ENCODE measurements at regions of chr1 and their contacts with region 1.

Region 1: DNA sequence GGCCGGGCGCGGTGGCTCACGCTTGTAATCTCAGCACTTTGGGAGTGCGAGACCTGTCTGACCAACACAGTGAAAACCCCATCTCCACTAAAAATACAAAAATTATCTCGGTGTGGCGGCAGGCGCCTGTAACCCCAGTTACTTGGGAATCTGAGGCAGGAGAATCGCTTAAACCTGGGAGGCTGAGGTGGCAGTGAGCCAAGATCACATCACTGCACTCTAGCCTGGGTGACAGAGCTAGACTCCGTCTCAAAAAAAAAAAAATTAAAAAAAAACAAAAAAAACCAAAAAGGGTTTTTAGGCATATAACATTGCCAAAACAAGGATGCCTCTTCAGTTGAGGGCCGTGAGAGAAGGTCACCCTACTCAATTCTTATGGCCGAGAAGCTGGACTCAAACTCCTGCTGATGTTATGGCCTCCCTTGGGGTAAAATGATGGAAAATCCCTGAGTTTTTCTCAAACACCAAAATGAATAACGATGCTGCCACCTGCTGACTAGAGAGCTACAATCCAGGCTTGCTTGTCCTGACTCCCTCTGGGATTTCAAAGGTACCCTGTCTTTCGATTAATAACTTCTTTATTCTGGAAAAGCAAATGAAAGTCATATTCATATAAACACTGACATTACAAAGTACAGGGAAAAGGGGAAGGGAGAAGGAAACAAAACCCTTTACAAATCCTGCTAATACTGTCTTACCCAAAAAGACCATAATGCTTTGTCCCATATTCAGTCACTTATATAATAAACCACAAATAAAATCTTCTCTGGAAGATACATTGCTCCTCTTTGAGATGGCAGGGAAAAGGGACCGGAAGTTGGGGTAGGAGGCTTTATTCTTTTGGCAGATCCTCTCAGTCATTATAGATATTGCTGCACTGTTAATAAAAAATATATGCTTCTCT is 10.7 kb downstream of the RAB42 start:
- DNase-seq: peak; percentile 47 to 50
- H3K4me3 ChIP-seq: no peak overlapping the region
- H3K27ac ChIP-seq: peak overlapping the region; percentile 89
- H3K4me1 ChIP-seq: peaks cover 23% of the 10 kb centered on the region
- H3K27me3 ChIP-seq: no peaks in the 10 kb centered on the region
- CTCF ChIP-seq: peak; percentile 75

Region 2: GRCh38 chr1:27858072-27858958 is 744.5 kb before region 1 on chr1:
- CTCF ChIA-PET with region 1: no interaction called
- POLR2A ChIA-PET with region 1: no interaction called
- intact Hi-C with region 1: loop called (anchors 5 kb)
- DNase-seq: peak; percentile 58 to 80
- H3K4me3 ChIP-seq: no peak overlapping the region
- H3K27ac ChIP-seq: no peak overlapping the region
- H3K4me1 ChIP-seq: peaks cover 9% of the 10 kb centered on the region
- H3K27me3 ChIP-seq: no peaks in the 10 kb centered on the region
- CTCF ChIP-seq: peak; percentile 91

Region 3: DNA sequence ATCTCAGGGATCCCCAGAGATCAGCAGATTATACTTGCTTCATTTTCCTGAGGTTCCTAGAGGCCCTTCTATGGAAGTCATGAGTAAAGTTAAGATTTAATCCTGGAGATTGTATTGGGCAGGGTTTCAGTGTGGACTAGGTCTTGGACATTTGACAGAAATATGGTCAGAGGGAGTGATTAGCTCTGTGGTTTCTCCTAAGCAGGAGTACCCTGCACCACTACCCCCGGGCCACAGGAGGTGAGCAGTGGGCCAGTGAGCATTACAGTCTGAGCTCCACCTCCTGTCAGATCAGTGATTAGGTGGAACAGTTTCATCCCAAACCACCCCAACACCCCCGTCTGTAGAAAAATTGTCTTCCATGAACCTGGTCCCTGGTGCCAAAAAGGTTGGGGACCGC is 190.1 kb before region 1 on chr1:
- CTCF ChIA-PET with region 1: no interaction called
- POLR2A ChIA-PET with region 1: no interaction called
- intact Hi-C with region 1: loop called (anchors 1 kb)
- DNase-seq: no peak
- H3K4me3 ChIP-seq: no peak overlapping the region
- H3K27ac ChIP-seq: no peak overlapping the region
- H3K4me1 ChIP-seq: peaks cover 13% of the 10 kb centered on the region
- H3K27me3 ChIP-seq: no peaks in the 10 kb centered on the region
- CTCF ChIP-seq: no peak

Region 4: GRCh38 chr1:28505406-28506187 is 97.2 kb before region 1 on chr1 and contains the start of gene RCC1:
- CTCF ChIA-PET with region 1: interaction called, 8 read pairs
- POLR2A ChIA-PET with region 1: interaction called, 22 read pairs
- intact Hi-C with region 1: no loop called
- DNase-seq: peak; percentile 92 to 95
- H3K4me3 ChIP-seq: peak within 1 kb of the TSS; percentile 83
- H3K27ac ChIP-seq: peak within 1 kb of the TSS; percentile 99
- H3K4me1 ChIP-seq: peaks cover 38% of the 10 kb centered on the region
- H3K27me3 ChIP-seq: 0 out of 2 replicates have a peak, but pooled peaks cover 3% of the 10 kb centered on the region
- CTCF ChIP-seq: no peak
- total RNA-seq, gene RCC1: 134 and 156 TPM in 2 replicates

Region 5: GRCh38 chr1:28552758-28553663 is 49.8 kb before region 1 on chr1 and contains the start of gene TRNAU1AP:
- CTCF ChIA-PET with region 1: interaction called, 3 read pairs
- POLR2A ChIA-PET with region 1: no interaction called
- intact Hi-C with region 1: loop called (anchors 5 kb)
- DNase-seq: peak; percentile 82 to 97
- H3K4me3 ChIP-seq: peak within 1 kb of the TSS; percentile 63
- H3K27ac ChIP-seq: peak within 1 kb of the TSS; percentile 62
- H3K4me1 ChIP-seq: peaks cover 6% of the 10 kb centered on the region
- H3K27me3 ChIP-seq: no peaks in the 10 kb centered on the region
- CTCF ChIP-seq: no peak
- total RNA-seq, gene TRNAU1AP: 31.7 and 43.0 TPM in 2 replicates

Measured in PC-9 (cell line).